Heart left ventricle (tissue), 16 donors: ENCODE measurements at regions of chr1 and their contacts with region 1.

Region 1: DNA sequence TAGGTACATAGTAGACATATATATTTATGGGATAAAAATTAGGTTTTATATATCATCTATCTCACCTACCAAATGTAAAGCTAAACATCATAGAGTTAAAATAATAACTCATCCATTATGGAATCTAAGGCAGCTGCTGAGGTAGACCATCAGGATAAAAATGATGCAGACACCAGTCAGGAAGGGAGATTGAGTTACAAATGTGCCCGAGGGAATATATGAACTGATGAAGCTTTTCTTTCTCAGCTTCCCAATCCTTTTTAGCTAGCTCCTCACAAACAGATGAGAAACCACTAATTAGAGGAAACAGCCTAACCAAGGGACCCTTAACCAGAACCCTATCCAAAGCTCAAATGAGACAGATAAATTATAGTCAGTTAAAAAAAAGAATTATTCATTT is 20.9 kb downstream of the TTLL7 start:
- DNase-seq: no peak
- ATAC-seq: no peak
- H3K4me3 ChIP-seq: no peak overlapping the region
- H3K27ac ChIP-seq: no peak overlapping the region
- H3K4me1 ChIP-seq: no peaks in the 10 kb centered on the region
- H3K27me3 ChIP-seq: no peaks in the 10 kb centered on the region
- CTCF ChIP-seq: no peak
- POLR2A ChIP-seq: no peak

Region 2: GRCh38 chr1:84020151-84020550 is 42.1 kb after region 1 on chr1:
- intact Hi-C with region 1: loop called in 1 of 10 experiments (anchors 1 kb)
- DNase-seq: no peak
- ATAC-seq: no peak
- H3K4me3 ChIP-seq: no peak overlapping the region
- H3K27ac ChIP-seq: no peak overlapping the region
- H3K4me1 ChIP-seq: no peaks in the 10 kb centered on the region
- H3K27me3 ChIP-seq: no peaks in the 10 kb centered on the region
- CTCF ChIP-seq: no peak
- POLR2A ChIP-seq: no peak

Region 3: DNA sequence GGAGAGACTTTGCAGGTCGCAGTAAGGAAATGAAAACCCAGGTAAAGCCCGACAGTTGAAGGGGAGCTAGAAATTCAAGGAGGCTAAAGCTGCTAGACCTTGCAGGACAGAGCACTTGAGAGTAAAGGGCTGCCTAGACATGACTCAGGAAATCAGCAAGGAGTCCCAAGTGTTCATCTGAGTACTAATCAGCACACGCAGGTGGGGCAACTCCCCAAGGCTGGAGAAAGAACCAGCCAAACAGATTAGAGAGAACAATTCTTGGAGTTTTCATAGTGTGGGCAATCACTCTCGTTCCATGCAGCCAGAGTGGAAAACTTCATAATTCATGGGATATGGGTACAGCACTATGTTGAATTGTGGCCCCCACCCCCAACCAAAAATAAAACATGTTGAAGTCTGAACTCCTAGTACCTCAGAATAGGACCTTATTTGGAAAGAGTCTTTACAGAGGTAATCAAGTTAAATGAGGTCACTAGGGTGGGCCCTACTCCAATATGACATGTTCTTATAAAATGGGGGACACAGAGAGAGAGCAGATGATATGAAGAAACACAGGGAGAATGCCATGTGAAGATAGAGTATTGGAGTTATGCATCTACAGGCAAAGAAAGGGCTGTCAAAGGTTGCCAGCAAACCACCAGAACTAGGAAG is 1194.8 kb after region 1 on chr1:
- intact Hi-C with region 1: no loop called
- DNase-seq: no peak
- ATAC-seq: no peak
- H3K4me3 ChIP-seq: no peak overlapping the region
- H3K27ac ChIP-seq: no peak overlapping the region
- H3K4me1 ChIP-seq: no peaks in the 10 kb centered on the region
- H3K27me3 ChIP-seq: no peaks in the 10 kb centered on the region
- CTCF ChIP-seq: no peak
- POLR2A ChIP-seq: no peak